H1 (cell line): ENCODE measurements at regions of chr20 and their contacts with region 1.

Region 1: GRCh38 chr20:37202267-37202943 is 23.1 kb upstream of the MROH8 start:
- DNase-seq: peak in 1 of 2 experiments; percentile 10
- H3K4me3 ChIP-seq: no peak overlapping the region
- H3K27ac ChIP-seq: no peak overlapping the region
- H3K4me1 ChIP-seq: no peaks in the 10 kb centered on the region
- H3K27me3 ChIP-seq: no peaks in the 10 kb centered on the region
- CTCF ChIP-seq: peak; percentile 33 to 61 (median 52); a peak in 3 of 4 replicates
- EP300 ChIP-seq: no peak
- POLR2A ChIP-seq: no peak
- RAD21 ChIP-seq: peak in 1 of 2 experiments; percentile 42; a peak in 2 of 4 replicates

Region 2: GRCh38 chr20:36591854-36592641 is 610.4 kb before region 1 on chr20:
- CTCF ChIA-PET with region 1: no interaction called
- POLR2A ChIA-PET with region 1: no interaction called
- DNase-seq: no peak
- H3K4me3 ChIP-seq: no peak overlapping the region
- H3K27ac ChIP-seq: no peak overlapping the region
- H3K4me1 ChIP-seq: peaks cover 0 to 8% (median 2%) of the 10 kb centered on the region in 4 experiments; a peak in 5 of 7 replicates
- H3K27me3 ChIP-seq: no peaks in the 10 kb centered on the region
- CTCF ChIP-seq: peak; percentile 49 to 65 (median 58)
- EP300 ChIP-seq: no peak
- POLR2A ChIP-seq: no peak
- RAD21 ChIP-seq: peak; percentile 51 to 65

Region 3: GRCh38 chr20:37235065-37235464 is 32.7 kb after region 1 on chr20:
- CTCF ChIA-PET with region 1: interaction called, 20 read pairs
- POLR2A ChIA-PET with region 1: interaction called, 5 read pairs
- DNase-seq: no peak
- H3K4me3 ChIP-seq: no peak overlapping the region
- H3K27ac ChIP-seq: no peak overlapping the region
- H3K4me1 ChIP-seq: peaks cover 4 to 6% (median 5%) of the 10 kb centered on the region in 4 experiments; a peak in 5 of 7 replicates
- H3K27me3 ChIP-seq: no peaks in the 10 kb centered on the region
- CTCF ChIP-seq: no peak
- EP300 ChIP-seq: no peak
- POLR2A ChIP-seq: no peak
- RAD21 ChIP-seq: no peak